Left colon (tissue), 2 donors: ENCODE measurements at regions of chr17 and their contacts with region 1.

Region 1: DNA sequence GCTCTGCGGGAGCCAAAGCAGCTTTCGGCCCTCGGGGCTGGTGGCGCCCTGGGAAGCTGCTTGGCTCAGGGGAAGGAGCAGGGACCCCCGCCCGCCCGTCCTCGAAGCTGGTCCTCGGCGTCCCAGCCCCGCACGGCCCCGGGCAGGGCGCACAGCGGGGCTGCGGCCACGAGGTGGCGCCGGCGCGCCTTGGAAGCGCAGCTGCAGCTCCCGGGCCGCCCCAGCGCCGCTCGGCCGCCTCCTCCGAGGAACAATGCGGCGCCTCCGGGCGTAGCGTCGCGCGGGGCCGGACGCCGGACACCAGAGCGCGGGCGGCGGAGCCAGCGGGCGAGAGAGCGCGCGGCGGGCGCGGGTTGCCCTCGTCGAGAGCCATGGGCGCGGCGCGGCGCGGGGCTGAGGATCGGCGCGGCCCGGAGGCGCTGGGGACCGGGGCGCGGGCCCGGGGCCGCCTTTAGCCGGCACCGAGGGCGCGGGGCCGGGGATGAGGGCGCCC is at the start of gene MGAT5B:
- DNase-seq: peak; percentile 43 to 81
- ATAC-seq: peak; percentile 99
- total RNA-seq, gene MGAT5B: 0.36 to 0.46 TPM

Region 2: DNA sequence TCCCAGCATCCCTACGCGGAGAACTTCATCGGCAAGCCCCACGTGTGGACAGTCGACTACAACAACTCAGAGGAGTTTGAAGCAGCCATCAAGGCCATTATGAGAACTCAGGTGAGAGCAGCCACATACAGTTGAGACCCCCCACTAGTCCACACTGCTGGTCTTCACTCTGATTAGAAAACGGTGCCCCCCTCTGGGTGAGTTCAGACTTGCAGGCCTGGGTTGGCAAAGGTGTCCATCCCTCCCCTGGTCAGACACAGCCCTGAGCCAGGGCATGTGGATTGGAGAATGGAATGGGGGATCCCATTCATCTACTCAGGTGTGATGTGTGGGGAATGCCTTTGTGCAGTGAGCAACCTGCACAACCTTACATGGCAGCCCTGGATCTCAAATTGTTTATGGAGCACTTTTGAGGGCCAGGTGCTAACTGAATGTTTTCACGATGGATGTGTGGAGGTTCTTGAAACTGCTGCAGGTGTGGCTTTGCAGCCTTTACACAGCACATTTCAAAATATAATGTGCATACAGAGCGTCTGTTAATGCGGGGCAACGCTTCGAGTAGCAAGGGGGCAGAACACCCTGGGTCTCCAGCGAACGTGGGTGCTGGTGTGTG is 72.6 kb after region 1 on chr17:
- intact Hi-C with region 1: no loop called
- DNase-seq: no peak
- ATAC-seq: no peak

Region 3: GRCh38 chr17:77054936-77055335 is 186.7 kb after region 1 on chr17:
- intact Hi-C with region 1: loop called (anchors 5 to 10 kb)
- DNase-seq: no peak
- ATAC-seq: no peak

Region 4: GRCh38 chr17:77247048-77247541 is 378.9 kb after region 1 on chr17:
- intact Hi-C with region 1: loop called in 1 of 2 experiments (anchors 10 kb)
- DNase-seq: peak; percentile 71 to 90
- ATAC-seq: peak; percentile 94